CD8-positive, alpha-beta memory T cell (primary cell): ENCODE measurements at regions of chr17 and their contacts with region 1.

Region 1: GRCh38 chr17:17391668-17392370 is 85.0 kb upstream of the MED9 start:
- DNase-seq: peak; percentile 40 to 81 (median 77)
- H3K4me3 ChIP-seq: peak overlapping the region; percentile 63
- H3K4me3 Mint-ChIP-seq: peak overlapping the region; percentile 82 to 91 (median 86)
- H3K27ac ChIP-seq: peak overlapping the region; percentile 17
- H3K27ac Mint-ChIP-seq: peak overlapping the region; percentile 64 to 96 (median 86)
- H3K4me1 ChIP-seq: peaks cover 22% of the 10 kb centered on the region
- H3K4me1 Mint-ChIP-seq: peaks cover 26 to 34% (median 27%) of the 10 kb centered on the region in 3 donors
- H3K27me3 ChIP-seq: no peaks in the 10 kb centered on the region
- H3K27me3 Mint-ChIP-seq: peaks cover 0 to 6% of the 10 kb centered on the region in 2 donors

Region 2: GRCh38 chr17:17344462-17345293 is 47.1 kb before region 1 on chr17:
- CTCF ChIA-PET with region 1: no interaction called
- POLR2A ChIA-PET with region 1: no interaction called
- DNase-seq: no peak
- H3K4me3 ChIP-seq: no peak overlapping the region
- H3K4me3 Mint-ChIP-seq: no peak overlapping the region
- H3K27ac ChIP-seq: no peak overlapping the region
- H3K27ac Mint-ChIP-seq: peak overlapping the region in 1 of 8 donors; percentile 51
- H3K4me1 ChIP-seq: no peaks in the 10 kb centered on the region
- H3K4me1 Mint-ChIP-seq: no peaks in the 10 kb centered on the region
- H3K27me3 ChIP-seq: no peaks in the 10 kb centered on the region
- H3K27me3 Mint-ChIP-seq: no peaks in the 10 kb centered on the region

Region 3: GRCh38 chr17:17403899-17404576 is 12.2 kb after region 1 on chr17:
- CTCF ChIA-PET with region 1: interaction called, 11 read pairs
- POLR2A ChIA-PET with region 1: interaction called, 3 read pairs
- DNase-seq: peak; percentile 10 to 70 (median 62)
- H3K4me3 ChIP-seq: peak overlapping the region; percentile 57
- H3K4me3 Mint-ChIP-seq: peak overlapping the region; percentile 2 to 84 (median 72)
- H3K27ac ChIP-seq: no peak overlapping the region
- H3K27ac Mint-ChIP-seq: peak overlapping the region; percentile 87 to 97 (median 93)
- H3K4me1 ChIP-seq: peaks cover 46% of the 10 kb centered on the region
- H3K4me1 Mint-ChIP-seq: peaks cover 68 to 82% (median 69%) of the 10 kb centered on the region in 3 donors
- H3K27me3 ChIP-seq: no peaks in the 10 kb centered on the region
- H3K27me3 Mint-ChIP-seq: no peaks in the 10 kb centered on the region

Region 4: DNA sequence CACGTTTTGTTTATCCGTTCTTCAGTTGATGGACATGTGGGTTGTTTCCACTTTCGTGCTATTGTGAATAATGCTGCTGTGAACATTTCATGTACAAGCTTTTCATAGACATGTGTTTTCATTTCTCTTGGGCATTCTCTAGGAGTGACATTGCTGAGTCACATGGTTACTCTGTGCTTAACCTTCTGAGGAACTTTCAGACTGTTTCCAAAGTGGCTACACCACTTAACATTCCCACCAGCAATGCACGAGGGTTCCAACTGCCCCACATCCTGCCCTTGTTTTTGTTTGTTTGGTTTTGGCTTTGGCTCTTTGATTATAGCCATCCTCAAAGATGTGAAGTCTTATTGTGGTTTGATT is 213.9 kb after region 1 on chr17:
- CTCF ChIA-PET with region 1: no interaction called
- POLR2A ChIA-PET with region 1: no interaction called
- DNase-seq: no peak
- H3K4me3 ChIP-seq: no peak overlapping the region
- H3K4me3 Mint-ChIP-seq: no peak overlapping the region
- H3K27ac ChIP-seq: no peak overlapping the region
- H3K27ac Mint-ChIP-seq: no peak overlapping the region
- H3K4me1 ChIP-seq: no peaks in the 10 kb centered on the region
- H3K4me1 Mint-ChIP-seq: no peaks in the 10 kb centered on the region
- H3K27me3 ChIP-seq: no peaks in the 10 kb centered on the region
- H3K27me3 Mint-ChIP-seq: peaks cover 0 to 8% of the 10 kb centered on the region in 2 donors